Esophagus muscularis mucosa (tissue), 4 donors: ENCODE measurements at regions of chrX and their contacts with region 1.

Region 1: DNA sequence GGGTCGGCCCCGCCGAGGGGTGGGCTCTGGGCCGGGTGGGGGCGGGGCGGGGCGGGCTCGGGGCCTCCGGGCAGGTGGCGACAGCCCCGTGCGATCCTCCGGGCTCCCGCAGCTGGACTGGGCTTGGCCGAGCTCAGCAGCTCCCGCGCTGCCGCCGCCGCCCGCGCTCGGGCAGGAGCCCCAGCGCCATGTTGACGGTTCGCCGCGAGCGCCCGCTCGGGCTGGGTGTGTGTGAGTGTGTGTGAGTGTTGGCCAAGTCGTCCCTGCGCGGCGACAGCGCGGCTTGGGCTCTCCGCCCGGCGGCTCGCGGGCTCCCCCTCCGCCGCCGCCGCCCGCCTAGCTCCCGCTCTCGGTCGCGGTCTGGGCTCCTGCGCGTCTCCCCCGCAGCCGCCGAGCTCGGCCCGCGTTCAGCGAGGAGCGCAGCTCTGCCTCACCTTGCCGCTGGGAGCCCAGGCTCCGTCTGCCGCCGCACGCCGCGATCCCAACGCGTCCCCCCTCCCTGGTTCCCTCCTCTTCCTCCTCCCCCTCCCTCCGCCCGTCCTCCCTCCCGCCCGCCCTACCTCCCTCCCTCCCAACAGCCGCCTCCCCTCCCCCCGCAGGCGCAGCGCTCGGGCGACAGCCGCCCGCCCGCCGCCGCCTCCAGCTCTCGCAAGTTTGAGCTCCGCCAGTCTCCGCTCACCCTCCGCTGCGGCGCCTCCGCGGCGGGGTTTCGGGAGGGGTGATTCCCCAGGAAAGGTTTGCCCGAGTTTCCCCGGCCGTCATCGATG is at the start of gene BCOR:
- DNase-seq: no peak
- H3K4me3 ChIP-seq: peak within 1 kb of the TSS; percentile 72 to 86 (median 76)
- H3K27ac ChIP-seq: peak within 1 kb of the TSS; percentile 87 to 93 (median 92)
- H3K4me1 ChIP-seq: peaks cover 4 to 91% (median 37%) of the 10 kb centered on the region in 4 donors
- H3K27me3 ChIP-seq: peaks cover 0 to 36% (median 0%) of the 10 kb centered on the region in 4 donors
- CTCF ChIP-seq: no peak
- EP300 ChIP-seq: no peak
- POLR2A ChIP-seq: peak; percentile 58
- total RNA-seq, gene BCOR: 19.9 to 32.5 (median 26.0) TPM

Region 2: DNA sequence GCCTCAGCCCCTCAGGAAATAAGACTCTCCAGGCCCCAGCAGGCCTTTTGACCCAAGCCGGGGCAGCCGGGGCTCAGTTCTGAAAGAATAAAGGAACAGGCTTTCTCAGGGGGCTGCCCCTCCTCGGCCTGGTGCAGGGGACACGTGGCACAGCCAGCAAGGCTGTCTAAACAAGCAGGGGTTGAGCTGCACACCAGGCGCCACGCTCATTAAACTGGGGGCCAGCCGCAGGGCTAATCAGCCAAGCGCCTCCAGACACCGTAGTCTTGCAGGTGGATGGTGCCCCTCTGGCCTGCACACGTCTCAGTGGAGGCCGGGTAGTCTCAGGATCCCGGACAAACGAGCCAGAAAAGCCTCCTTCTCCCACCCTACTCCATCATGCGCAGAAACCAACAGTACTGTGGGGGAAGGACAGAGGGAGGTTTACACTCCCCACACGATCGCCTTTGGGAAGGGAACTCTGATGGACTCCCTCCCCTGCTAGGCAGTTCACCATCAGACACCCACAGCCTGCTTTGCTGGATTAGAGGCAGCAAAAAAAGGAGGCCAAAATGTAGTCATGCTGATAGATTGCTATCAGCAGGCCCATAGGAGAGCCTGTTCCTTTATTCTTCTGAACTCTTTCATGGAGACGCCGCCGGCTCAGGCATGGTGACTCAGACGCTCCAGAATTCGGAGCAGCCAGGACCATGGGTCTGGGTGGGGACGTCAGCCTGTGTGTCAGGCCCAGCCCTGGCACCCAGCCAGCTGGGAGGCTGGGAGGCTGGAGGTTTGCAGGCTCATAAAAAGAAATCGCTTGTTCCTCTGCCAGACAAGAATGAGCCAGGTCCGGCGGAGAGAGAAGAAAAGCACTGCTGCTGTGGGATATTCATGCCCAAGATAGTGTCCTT is 342.3 kb before region 1 on chrX:
- intact Hi-C with region 1: loop called (anchors 5 kb)
- DNase-seq: peak; percentile 92
- H3K4me3 ChIP-seq: no peak overlapping the region
- H3K27ac ChIP-seq: peak overlapping the region; percentile 73 to 81 (median 80)
- H3K4me1 ChIP-seq: peaks cover 26 to 49% (median 44%) of the 10 kb centered on the region in 4 donors
- H3K27me3 ChIP-seq: peaks cover 0 to 5% (median 0%) of the 10 kb centered on the region in 4 donors
- CTCF ChIP-seq: no peak
- EP300 ChIP-seq: no peak
- POLR2A ChIP-seq: no peak

Region 3: DNA sequence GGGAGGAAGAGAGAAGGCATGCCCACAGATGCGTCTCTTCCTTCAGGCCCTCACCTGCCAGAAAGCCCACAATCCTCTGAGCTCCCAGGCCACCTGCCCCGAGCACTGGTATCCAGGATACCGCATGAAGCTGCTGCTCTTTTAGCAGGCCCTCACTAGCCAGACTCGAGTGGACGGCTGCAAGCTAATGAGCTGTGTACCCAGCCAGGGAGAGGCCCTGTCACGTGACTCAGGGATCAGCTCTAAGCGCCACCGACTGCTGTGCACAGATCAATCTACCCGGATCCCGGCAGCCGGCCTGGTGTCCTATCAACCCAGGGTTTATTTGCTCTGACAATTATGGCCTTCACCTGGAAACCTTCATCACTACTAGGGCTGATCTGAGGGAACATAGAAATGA is 39.0 kb before region 1 on chrX:
- intact Hi-C with region 1: no loop called
- DNase-seq: no peak
- H3K4me3 ChIP-seq: no peak overlapping the region
- H3K27ac ChIP-seq: no peak overlapping the region
- H3K4me1 ChIP-seq: peaks cover 0 to 18% (median 15%) of the 10 kb centered on the region in 4 donors
- H3K27me3 ChIP-seq: peaks cover 0 to 3% (median 0%) of the 10 kb centered on the region in 4 donors
- CTCF ChIP-seq: no peak
- EP300 ChIP-seq: no peak
- POLR2A ChIP-seq: no peak

Region 4: DNA sequence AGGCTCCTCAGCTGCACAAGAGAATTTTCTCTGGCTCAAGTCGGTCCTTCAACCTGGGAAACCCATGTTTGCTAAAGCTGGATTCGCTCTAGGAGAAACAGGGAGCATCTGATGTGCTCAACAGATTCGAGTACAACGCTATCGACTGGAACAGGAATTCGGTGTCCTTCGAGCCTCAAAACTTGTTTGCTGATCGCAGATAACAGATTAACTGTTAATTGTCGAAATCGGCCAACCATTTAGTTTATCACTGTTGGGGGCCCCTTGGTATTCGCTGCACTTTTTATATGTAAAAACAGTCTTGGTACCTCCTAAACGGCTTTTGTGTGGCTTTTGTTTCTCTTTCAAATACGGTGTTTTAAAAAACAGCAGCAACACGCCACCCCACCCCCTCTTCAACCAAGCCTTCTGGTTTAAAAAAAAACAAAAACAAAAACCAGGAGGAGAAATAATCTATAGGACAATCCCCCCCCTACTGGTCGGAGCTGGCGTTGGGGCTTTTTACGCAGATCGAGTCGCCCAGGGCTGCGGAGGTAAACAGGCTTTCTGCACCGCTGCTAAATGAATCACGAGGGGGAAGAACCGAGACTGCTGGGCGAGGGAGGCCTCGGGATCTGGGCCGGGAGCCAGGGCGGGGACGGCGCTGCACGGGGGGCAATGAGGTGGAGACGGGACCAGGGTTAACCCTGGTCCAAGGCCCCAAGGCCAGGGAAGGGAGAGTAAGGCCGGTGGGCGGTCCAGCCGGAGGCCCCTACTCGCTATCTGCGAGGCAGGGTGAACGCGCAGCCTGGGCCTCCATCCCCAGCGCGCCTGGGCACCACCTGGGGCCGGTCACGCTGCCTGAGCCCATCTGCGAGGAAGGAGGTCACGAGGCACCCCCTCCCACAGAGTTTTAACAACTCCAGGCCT is 71.8 kb after region 1 on chrX:
- intact Hi-C with region 1: loop called (anchors 5 kb)
- DNase-seq: no peak
- H3K4me3 ChIP-seq: no peak overlapping the region
- H3K27ac ChIP-seq: peak overlapping the region in 3 of 4 donors; percentile 30 to 96 (median 90)
- H3K4me1 ChIP-seq: peaks cover 25 to 79% (median 58%) of the 10 kb centered on the region in 4 donors
- H3K27me3 ChIP-seq: peaks cover 0 to 22% (median 2%) of the 10 kb centered on the region in 4 donors
- CTCF ChIP-seq: peak; percentile 20 to 33 (median 23)
- EP300 ChIP-seq: no peak
- POLR2A ChIP-seq: no peak